ENCODE measurements at regions of chr10 and their contacts with region 1.

Region 1: DNA sequence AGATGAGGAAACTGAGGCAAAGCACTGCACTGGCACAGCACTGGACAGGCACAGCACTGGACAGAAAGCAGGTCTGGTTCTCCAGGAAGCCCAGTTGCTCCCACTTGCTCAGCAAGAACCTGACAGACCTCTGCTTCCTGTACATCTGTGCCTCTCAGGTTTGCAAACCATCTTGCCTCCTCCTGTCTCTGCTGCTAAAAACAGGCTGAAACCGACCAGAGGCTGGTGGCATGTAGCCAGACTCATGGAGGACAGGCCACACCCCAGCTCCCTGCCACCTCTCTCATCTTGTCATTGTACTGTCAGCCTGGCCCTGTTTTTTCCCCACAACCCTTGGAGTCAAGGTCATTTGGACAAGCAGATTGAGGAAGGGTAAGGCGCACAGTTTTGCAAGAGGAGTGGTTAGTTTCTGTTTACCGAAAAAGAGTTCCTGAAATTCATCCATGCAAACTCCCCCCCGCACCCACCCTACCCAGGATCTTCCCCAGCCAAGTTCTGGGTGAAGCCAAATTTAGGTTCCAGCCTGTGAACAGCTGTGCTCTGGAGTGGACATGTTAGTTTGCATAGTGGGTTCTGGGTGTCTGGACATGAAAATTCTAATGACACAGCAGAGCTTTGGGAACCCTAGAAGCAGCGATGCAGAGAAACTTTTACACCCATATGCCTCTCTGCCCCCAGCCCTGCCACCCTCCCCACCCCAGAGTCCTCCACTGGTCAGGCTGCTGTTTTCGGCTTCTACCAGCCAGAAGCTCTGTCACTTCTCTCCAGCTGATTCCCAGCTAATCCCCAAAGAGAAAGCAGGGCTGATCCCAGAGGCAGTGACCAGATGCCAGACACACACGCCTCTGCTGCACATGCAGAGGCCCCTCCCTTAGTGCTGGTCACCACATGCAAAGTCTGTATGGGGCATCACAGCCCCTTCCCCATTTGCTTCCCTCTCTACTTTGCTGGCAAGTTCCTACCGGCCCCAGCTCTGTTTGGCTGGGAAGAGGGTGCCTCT is 8.5 kb upstream of the C10orf105 start:
- DNase-seq: peak; percentile 89
- ATAC-seq: peak; percentile 37
- H3K4me3 Mint-ChIP-seq: peak overlapping the region; percentile 58
- H3K27ac Mint-ChIP-seq: peak overlapping the region; percentile 99
- H3K4me1 Mint-ChIP-seq: peaks cover 97% of the 10 kb centered on the region
- H3K27me3 Mint-ChIP-seq: no peaks in the 10 kb centered on the region
- CTCF ChIP-seq: no peak

Region 2: GRCh38 chr10:71696628-71697326 is 31.3 kb before region 1 on chr10:
- CTCF ChIA-PET with region 1: interaction called, 49 read pairs
- POLR2A ChIA-PET with region 1: interaction called, 4 read pairs
- intact Hi-C with region 1: no loop called
- DNase-seq: peak; percentile 83
- ATAC-seq: peak; percentile 38
- H3K4me3 Mint-ChIP-seq: no peak overlapping the region
- H3K27ac Mint-ChIP-seq: no peak overlapping the region
- H3K4me1 Mint-ChIP-seq: peaks cover 55% of the 10 kb centered on the region
- H3K27me3 Mint-ChIP-seq: no peaks in the 10 kb centered on the region
- CTCF ChIP-seq: peak; percentile 94

Region 3: GRCh38 chr10:71713135-71714030 is 14.7 kb before region 1 on chr10:
- CTCF ChIA-PET with region 1: interaction called, 57 read pairs
- POLR2A ChIA-PET with region 1: interaction called, 65 read pairs
- intact Hi-C with region 1: no loop called
- DNase-seq: peak; percentile 61
- ATAC-seq: peak; percentile 61
- H3K4me3 Mint-ChIP-seq: peak overlapping the region; percentile 70
- H3K27ac Mint-ChIP-seq: peak overlapping the region; percentile 96
- H3K4me1 Mint-ChIP-seq: peaks cover 65% of the 10 kb centered on the region
- H3K27me3 Mint-ChIP-seq: no peaks in the 10 kb centered on the region
- CTCF ChIP-seq: no peak

Region 4: GRCh38 chr10:71740069-71740468 is 12.0 kb after region 1 on chr10:
- CTCF ChIA-PET with region 1: interaction called, 31 read pairs
- POLR2A ChIA-PET with region 1: interaction called, 59 read pairs
- intact Hi-C with region 1: no loop called
- DNase-seq: no peak
- ATAC-seq: no peak
- H3K4me3 Mint-ChIP-seq: no peak overlapping the region
- H3K27ac Mint-ChIP-seq: peak overlapping the region; percentile 97
- H3K4me1 Mint-ChIP-seq: peaks cover 100% of the 10 kb centered on the region
- H3K27me3 Mint-ChIP-seq: no peaks in the 10 kb centered on the region
- CTCF ChIP-seq: no peak

Region 5: DNA sequence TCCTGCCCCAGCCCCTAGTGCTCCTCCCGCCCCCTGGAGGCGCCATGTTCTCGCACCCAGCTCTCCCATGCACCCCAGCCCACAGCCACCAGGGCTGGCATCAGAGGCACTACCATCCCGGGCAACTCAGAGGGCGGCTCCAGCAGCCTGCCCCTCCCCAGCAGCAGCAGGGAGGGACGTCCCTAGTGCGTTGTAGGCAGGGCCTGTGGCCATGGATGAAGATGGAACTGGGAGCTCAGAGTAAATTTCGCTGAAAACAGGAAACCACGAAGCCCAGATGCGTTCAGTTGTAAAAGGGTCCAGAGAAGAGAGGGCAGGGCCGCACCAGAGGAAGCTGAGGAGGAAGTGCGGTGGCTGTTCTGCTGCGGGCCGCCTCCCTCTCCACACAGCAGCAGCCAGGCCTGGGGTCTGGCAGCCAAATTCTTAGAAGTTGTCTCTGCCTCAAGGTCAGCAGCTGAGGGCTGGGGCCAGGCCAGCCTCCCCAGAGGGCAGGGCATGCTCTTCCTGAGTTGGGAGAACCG is 20.7 kb after region 1 on chr10:
- CTCF ChIA-PET with region 1: interaction called, 31 read pairs
- POLR2A ChIA-PET with region 1: interaction called, 59 read pairs
- intact Hi-C with region 1: no loop called
- DNase-seq: peak; percentile 89
- ATAC-seq: peak; percentile 88
- H3K4me3 Mint-ChIP-seq: peak overlapping the region; percentile 59
- H3K27ac Mint-ChIP-seq: peak overlapping the region; percentile 98
- H3K4me1 Mint-ChIP-seq: peaks cover 96% of the 10 kb centered on the region
- H3K27me3 Mint-ChIP-seq: no peaks in the 10 kb centered on the region
- CTCF ChIP-seq: no peak

Region 6: GRCh38 chr10:71756311-71757191 is 28.5 kb after region 1 on chr10:
- CTCF ChIA-PET with region 1: interaction called, 7 read pairs
- POLR2A ChIA-PET with region 1: interaction called, 11 read pairs
- intact Hi-C with region 1: no loop called
- DNase-seq: no peak
- ATAC-seq: peak; percentile 57
- H3K4me3 Mint-ChIP-seq: peak overlapping the region; percentile 68
- H3K27ac Mint-ChIP-seq: peak overlapping the region; percentile 92
- H3K4me1 Mint-ChIP-seq: peaks cover 87% of the 10 kb centered on the region
- H3K27me3 Mint-ChIP-seq: no peaks in the 10 kb centered on the region
- CTCF ChIP-seq: no peak

Region 7: GRCh38 chr10:71766702-71767419 is 38.8 kb after region 1 on chr10:
- CTCF ChIA-PET with region 1: interaction called, 44 read pairs
- POLR2A ChIA-PET with region 1: interaction called, 116 read pairs
- intact Hi-C with region 1: loop called (anchors 1 kb)
- DNase-seq: peak; percentile 72
- ATAC-seq: peak; percentile 6
- H3K4me3 Mint-ChIP-seq: peak overlapping the region; percentile 32
- H3K27ac Mint-ChIP-seq: peak overlapping the region; percentile 95
- H3K4me1 Mint-ChIP-seq: peaks cover 88% of the 10 kb centered on the region
- H3K27me3 Mint-ChIP-seq: no peaks in the 10 kb centered on the region
- CTCF ChIP-seq: no peak